Heart left ventricle (tissue), 16 donors: ENCODE measurements at regions of chr20 and their contacts with region 1.

Region 1: DNA sequence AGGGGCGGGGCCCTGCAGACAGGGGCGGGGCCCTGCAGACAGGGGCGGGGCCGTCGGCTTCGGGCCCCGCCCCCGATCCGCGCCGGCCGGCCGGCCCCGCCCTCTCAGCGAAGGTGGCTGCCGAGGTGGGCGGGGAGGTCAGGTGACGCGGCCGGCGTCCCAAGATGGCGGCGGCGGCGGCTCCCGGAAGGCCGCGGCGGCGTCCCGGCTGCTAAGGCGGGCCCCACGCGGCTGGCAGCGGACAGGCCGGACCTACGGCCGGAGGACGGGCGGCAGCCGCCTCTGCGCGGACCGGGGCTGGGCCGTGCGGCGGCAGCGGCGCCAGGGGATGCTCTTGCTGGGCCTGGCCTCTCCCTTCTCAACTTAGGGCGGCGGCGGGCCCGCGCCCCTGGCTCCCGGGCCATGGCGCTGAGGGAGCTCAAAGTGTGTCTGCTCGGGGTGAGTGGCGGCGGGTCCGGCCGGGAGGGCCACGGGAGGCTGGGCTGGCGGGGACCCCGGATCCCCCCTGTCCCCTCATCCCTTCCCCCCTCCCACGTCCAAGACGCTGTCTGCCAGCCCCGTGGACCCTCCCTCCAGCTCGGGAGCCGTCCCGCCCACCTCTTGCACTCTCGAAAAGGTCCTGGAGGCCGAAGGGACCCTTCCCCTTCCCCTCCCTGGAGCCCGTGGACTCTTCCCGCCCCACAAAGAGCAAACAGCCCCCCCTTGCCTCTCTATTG is at the start of gene RAB22A:
- DNase-seq: peak; percentile 80 to 92 (median 88)
- ATAC-seq: peak; percentile 83 to 96 (median 93)
- H3K4me3 ChIP-seq: peak within 1 kb of the TSS; percentile 85 to 100 (median 99)
- H3K27ac ChIP-seq: peak within 1 kb of the TSS; percentile 79 to 93 (median 88)
- H3K4me1 ChIP-seq: peaks cover 0 to 52% (median 16%) of the 10 kb centered on the region in 12 donors
- H3K27me3 ChIP-seq: no peaks in the 10 kb centered on the region
- CTCF ChIP-seq: no peak
- POLR2A ChIP-seq: peak in 1 of 2 donors; percentile 85
- total RNA-seq, gene RAB22A: 5.4 to 9.7 (median 7.6) TPM

Region 2: DNA sequence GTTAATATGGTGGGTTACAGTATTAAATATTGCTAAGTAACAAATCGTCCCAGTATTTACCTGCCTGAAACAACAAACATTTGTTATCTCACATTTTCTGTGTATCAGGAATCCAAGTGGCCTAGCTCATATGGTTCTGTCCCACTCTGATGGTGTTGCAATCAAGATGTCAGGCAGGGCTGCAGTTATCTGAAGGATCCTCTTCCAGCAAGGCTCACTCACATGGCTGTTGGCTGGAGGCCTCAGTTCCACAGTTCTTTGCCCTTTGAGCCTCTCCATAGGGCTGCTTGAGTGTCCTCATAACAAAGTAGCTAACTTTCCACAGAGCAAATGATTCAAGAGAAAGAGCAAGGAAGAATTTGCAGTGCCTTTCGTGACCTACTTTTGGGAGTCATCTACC is 17.5 kb after region 1 on chr20:
- intact Hi-C with region 1: no loop called
- DNase-seq: no peak
- ATAC-seq: peak in 2 of 4 donors; percentile 61 to 75
- H3K4me3 ChIP-seq: no peak overlapping the region
- H3K27ac ChIP-seq: no peak overlapping the region
- H3K4me1 ChIP-seq: peaks cover 0 to 51% (median 14%) of the 10 kb centered on the region in 12 donors
- H3K27me3 ChIP-seq: no peaks in the 10 kb centered on the region
- CTCF ChIP-seq: no peak
- POLR2A ChIP-seq: no peak

Region 3: DNA sequence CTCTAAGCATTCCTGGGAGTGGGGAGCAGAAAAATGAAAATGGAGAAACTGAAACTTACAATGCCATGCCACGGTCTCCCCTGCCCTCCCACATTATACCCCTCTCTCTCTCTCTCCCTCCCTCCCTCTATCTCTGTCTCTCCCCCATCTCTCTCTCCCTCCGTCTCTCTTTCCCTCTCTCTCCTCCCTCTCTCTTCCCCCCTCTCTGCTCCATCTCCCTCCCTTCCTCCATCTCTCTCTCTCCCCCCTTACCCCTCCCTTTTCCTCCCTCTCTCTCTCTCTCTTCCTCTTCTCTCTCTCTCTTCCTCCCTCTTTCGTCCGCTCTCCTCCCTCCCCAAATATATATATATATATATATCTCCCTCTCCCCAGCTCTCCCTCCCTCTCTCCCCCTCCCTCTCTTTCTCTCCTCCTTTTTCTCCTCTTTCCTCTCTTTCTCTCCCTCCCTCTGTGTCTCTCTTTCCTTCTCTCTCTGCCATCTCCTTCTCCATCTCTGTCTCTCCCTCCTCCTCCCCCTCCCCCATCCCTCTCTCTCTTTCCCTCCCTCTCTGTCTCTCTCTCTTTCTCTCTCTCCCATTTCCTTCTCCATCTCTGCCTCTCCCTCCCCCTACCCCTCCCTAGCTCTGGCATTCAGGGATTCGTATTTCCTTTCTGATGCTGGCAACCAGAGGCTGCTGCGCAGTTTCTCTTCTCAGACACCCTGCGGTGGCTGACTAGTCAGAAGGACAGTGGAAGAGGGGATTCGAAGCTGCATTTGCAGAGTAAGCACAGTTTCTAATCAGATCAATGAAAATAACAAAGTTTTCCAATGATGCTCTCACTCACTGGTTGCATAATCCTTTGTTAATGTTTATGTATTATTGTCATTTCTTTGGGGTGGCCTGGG is 65.4 kb after region 1 on chr20:
- intact Hi-C with region 1: loop called in 4 of 10 experiments (anchors 5 to 10 kb)
- DNase-seq: peak in 2 of 5 donors; percentile 16 to 34
- ATAC-seq: no peak
- H3K4me3 ChIP-seq: no peak overlapping the region
- H3K27ac ChIP-seq: no peak overlapping the region
- H3K4me1 ChIP-seq: peaks cover 0 to 3% (median 0%) of the 10 kb centered on the region in 12 donors
- H3K27me3 ChIP-seq: peaks cover 0 to 6% (median 0%) of the 10 kb centered on the region in 9 donors
- CTCF ChIP-seq: no peak
- POLR2A ChIP-seq: no peak

Region 4: GRCh38 chr20:58388882-58389323 is 79.2 kb after region 1 on chr20 and contains the start of gene VAPB:
- intact Hi-C with region 1: loop called in 7 of 10 experiments (anchors 1 to 10 kb)
- DNase-seq: peak; percentile 94 to 99 (median 96)
- ATAC-seq: peak; percentile 99 to 100 (median 99)
- H3K4me3 ChIP-seq: peak within 1 kb of the TSS; percentile 69 to 91 (median 86)
- H3K27ac ChIP-seq: peak within 1 kb of the TSS; percentile 80 to 97 (median 94)
- H3K4me1 ChIP-seq: peaks cover 0 to 46% (median 29%) of the 10 kb centered on the region in 12 donors
- H3K27me3 ChIP-seq: no peaks in the 10 kb centered on the region
- CTCF ChIP-seq: no peak
- POLR2A ChIP-seq: peak in 1 of 2 donors; percentile 85
- total RNA-seq, gene VAPB: 30.7 to 76.1 (median 63.8) TPM

Region 5: DNA sequence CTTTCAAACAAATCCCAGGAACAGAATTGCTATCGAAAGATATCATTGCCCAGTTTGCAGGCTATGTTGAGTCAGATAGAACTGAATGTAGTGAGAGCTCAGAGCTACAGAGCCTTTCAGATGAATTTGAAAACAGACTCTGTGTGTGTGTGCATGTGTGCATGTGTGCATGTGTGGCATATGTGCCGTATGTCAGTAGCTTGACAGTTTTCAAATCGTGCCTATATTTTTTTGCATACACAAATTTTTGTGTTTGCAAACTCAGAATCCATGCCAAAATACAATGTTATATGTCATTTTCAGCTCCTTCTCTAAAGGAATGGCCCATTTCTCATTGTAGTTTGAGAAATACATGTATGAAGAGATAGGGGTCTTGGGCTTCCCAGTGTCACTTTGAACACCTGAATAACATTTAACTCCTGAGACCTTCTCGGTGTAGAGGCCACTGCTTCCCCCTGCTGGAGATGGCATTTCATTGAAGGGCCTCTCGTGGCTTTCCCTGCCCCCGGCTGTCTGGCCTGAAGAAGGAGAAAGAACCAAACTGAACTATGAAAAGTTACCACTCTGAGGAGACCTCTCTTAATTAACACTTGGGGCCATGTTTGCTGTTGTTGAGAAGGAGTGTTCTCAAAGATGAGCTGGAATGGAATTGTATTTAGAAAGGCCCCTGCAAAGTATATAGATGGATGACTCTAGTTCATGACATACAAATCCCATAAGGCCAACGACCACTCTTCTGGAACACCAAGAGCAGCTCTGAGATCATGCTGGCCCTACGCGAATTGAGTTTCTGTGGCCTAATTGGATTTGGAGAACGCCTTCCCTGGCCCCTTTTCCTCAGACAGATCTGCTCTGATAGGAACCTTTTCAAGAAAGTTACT is 138.0 kb after region 1 on chr20:
- intact Hi-C with region 1: loop called in 1 of 10 experiments (anchors 5 kb)
- DNase-seq: peak in 1 of 5 donors; percentile 42
- ATAC-seq: peak in 3 of 4 donors; percentile 53 to 78 (median 71)
- H3K4me3 ChIP-seq: no peak overlapping the region
- H3K27ac ChIP-seq: no peak overlapping the region
- H3K4me1 ChIP-seq: peaks cover 0 to 8% (median 0%) of the 10 kb centered on the region in 12 donors
- H3K27me3 ChIP-seq: no peaks in the 10 kb centered on the region
- CTCF ChIP-seq: peak; percentile 46 to 65 (median 54)
- POLR2A ChIP-seq: no peak